ENCODE measurements at regions of chr7 and their contacts with region 1.

Region 1: DNA sequence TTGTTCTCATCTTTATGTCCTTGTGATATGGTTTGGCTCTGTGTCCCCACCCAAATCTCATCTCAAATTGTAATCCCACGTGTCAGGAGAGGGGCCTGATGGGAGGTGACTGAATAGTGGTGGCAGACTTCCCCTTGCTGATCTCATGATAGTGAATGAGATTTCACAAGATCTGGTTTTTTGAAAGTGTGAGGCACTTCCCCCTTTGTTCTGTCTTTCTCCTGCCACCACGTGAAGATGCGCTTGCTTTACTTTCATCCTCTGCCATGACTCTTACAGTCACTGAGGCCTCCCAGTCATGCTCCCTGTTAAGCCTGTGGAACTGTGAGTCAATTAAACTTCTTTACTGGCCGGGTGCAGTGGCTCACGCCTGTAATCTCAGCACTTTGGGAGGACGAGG is 161.0 kb downstream of the HERPUD2 start:
- DNase-seq: no peak
- ATAC-seq: no peak
- H3K4me3 ChIP-seq: no peak overlapping the region
- H3K4me3 Mint-ChIP-seq: no peak overlapping the region
- H3K27ac ChIP-seq: no peak overlapping the region
- H3K27ac Mint-ChIP-seq: no peak overlapping the region
- H3K4me1 ChIP-seq: peaks cover 0 to 3% of the 10 kb centered on the region in 2 experiments
- H3K4me1 Mint-ChIP-seq: peaks cover 0 to 5% (median 3%) of the 10 kb centered on the region in 3 donors
- H3K27me3 ChIP-seq: peaks cover 0 to 21% of the 10 kb centered on the region in 2 experiments
- H3K27me3 Mint-ChIP-seq: peaks cover 6 to 16% of the 10 kb centered on the region in 2 donors

Region 2: GRCh38 chr7:35241431-35241830 is 292.5 kb before region 1 on chr7:
- CTCF ChIA-PET with region 1: interaction called in 1 of 2 experiments, 14 read pairs
- POLR2A ChIA-PET with region 1: no interaction called
- DNase-seq: no peak
- ATAC-seq: no peak
- H3K4me3 ChIP-seq: no peak overlapping the region
- H3K4me3 Mint-ChIP-seq: no peak overlapping the region
- H3K27ac ChIP-seq: no peak overlapping the region
- H3K27ac Mint-ChIP-seq: no peak overlapping the region
- H3K4me1 ChIP-seq: no peaks in the 10 kb centered on the region
- H3K4me1 Mint-ChIP-seq: no peaks in the 10 kb centered on the region
- H3K27me3 ChIP-seq: peaks cover 6 to 9% of the 10 kb centered on the region in 2 experiments
- H3K27me3 Mint-ChIP-seq: peaks cover 23 to 28% of the 10 kb centered on the region in 2 donors